ENCODE measurements at regions of chr3 and their contacts with region 1.

Region 1: GRCh38 chr3:186534113-186534669 is 10.0 kb downstream of the CRYGS start:
- DNase-seq: peak; percentile 70
- H3K4me3 Mint-ChIP-seq: peak overlapping the region; percentile 46
- H3K27ac Mint-ChIP-seq: peak overlapping the region; percentile 95
- H3K4me1 Mint-ChIP-seq: peaks cover 89% of the 10 kb centered on the region
- H3K27me3 Mint-ChIP-seq: no peaks in the 10 kb centered on the region

Region 2: GRCh38 chr3:185976977-185977678 is 557.1 kb before region 1 on chr3:
- CTCF ChIA-PET with region 1: interaction called, 82 read pairs
- POLR2A ChIA-PET with region 1: no interaction called
- intact Hi-C with region 1: loop called (anchors 1 kb)
- DNase-seq: peak; percentile 92
- H3K4me3 Mint-ChIP-seq: no peak overlapping the region
- H3K27ac Mint-ChIP-seq: peak overlapping the region; percentile 23
- H3K4me1 Mint-ChIP-seq: peaks cover 15% of the 10 kb centered on the region
- H3K27me3 Mint-ChIP-seq: no peaks in the 10 kb centered on the region

Region 3: DNA sequence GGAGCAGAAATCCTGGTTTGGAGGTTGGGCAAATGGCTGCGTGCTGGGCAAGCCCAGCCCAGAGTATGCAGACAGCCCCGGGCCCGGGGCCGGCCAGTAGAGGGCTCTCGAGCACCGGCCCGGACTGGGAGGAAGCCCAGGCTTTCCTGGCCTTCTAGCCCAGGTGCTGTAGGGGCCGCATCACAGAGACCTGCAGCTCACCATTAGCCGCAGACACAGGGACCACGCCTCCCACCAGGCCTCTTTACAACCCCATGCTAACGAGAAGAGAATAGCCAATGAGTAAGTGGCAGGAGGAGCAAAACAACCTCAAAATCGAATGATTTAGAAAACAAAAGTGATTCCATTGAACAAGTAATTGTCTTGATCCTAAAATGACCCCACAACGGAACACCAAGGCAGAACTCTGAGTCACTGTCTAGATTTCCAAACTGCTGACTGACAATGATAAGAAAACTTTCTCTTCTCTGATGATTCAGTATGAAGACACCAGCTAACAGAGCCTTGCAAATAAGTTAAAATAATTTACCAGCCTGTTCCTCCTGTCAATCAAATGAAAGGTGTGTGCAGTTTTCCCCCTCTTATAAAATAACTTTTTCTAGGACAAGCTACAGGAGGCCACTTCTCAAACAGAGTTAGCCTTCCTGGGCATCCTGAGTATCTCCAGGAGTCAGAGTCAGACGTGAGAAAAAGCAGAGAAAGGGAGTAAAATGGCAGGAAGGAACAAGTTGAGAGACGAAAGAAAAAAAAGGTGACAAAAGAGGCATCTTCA is 274.4 kb before region 1 on chr3:
- CTCF ChIA-PET with region 1: interaction called, 170 read pairs
- POLR2A ChIA-PET with region 1: interaction called, 11 read pairs
- intact Hi-C with region 1: no loop called
- DNase-seq: peak; percentile 85
- H3K4me3 Mint-ChIP-seq: peak overlapping the region; percentile 24
- H3K27ac Mint-ChIP-seq: peak overlapping the region; percentile 65
- H3K4me1 Mint-ChIP-seq: peaks cover 27% of the 10 kb centered on the region
- H3K27me3 Mint-ChIP-seq: peaks cover 6% of the 10 kb centered on the region

Region 4: GRCh38 chr3:186432189-186432588 is 102.0 kb before region 1 on chr3:
- CTCF ChIA-PET with region 1: interaction called, 4 read pairs
- POLR2A ChIA-PET with region 1: interaction called, 7 read pairs
- intact Hi-C with region 1: loop called (anchors 1 kb)
- DNase-seq: peak; percentile 66
- H3K4me3 Mint-ChIP-seq: no peak overlapping the region
- H3K27ac Mint-ChIP-seq: no peak overlapping the region
- H3K4me1 Mint-ChIP-seq: peaks cover 15% of the 10 kb centered on the region
- H3K27me3 Mint-ChIP-seq: peaks cover 1% of the 10 kb centered on the region

Region 5: DNA sequence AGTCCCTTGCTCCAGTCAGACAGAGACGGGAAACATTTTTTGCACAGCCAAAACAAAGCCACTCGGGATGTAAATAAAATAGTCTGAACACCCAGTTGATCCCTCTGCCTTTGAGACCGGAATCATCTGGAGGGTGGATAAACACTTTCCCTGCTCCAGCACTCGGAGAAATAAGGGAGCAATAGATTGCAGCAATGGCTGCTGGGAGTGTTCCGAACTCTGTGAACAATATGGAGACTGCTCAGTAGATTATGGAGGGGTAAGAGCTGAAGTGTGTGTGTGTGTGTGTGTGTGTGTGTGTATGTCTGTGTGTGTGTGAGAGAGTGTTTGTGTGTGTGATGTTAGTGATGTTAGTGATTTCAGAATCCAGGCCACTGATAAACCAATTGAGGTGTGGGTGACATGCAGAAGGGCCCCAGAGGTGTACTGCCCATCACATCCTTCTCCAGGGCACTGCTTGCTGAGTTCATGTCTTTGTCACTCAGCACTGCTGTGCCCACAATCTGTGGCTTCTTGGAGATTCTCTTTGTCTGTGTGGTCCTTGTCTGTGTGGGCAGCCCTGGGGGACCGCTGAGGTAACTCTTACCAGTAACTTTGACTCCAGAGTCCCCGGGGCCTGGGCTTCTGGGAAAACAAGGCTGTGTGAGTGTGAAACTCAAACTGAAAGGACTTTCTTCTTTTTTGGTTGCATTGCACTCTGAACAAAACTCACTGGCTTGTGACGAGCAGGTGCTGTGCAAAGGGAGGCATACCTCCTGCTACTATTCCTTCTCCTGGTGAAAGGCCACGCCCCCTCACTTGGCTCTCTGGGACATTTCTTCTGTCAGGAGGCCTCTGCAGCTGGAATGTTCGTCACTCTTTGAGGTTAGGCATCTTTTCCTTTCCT is 13.0 kb before region 1 on chr3:
- CTCF ChIA-PET with region 1: interaction called, 50 read pairs
- POLR2A ChIA-PET with region 1: interaction called, 39 read pairs
- intact Hi-C with region 1: loop called (anchors 1 kb)
- DNase-seq: peak; percentile 88
- H3K4me3 Mint-ChIP-seq: peak overlapping the region; percentile 50
- H3K27ac Mint-ChIP-seq: peak overlapping the region; percentile 81
- H3K4me1 Mint-ChIP-seq: peaks cover 62% of the 10 kb centered on the region
- H3K27me3 Mint-ChIP-seq: no peaks in the 10 kb centered on the region